ENCODE measurements at regions of chr15 and their contacts with region 1.

Region 1: DNA sequence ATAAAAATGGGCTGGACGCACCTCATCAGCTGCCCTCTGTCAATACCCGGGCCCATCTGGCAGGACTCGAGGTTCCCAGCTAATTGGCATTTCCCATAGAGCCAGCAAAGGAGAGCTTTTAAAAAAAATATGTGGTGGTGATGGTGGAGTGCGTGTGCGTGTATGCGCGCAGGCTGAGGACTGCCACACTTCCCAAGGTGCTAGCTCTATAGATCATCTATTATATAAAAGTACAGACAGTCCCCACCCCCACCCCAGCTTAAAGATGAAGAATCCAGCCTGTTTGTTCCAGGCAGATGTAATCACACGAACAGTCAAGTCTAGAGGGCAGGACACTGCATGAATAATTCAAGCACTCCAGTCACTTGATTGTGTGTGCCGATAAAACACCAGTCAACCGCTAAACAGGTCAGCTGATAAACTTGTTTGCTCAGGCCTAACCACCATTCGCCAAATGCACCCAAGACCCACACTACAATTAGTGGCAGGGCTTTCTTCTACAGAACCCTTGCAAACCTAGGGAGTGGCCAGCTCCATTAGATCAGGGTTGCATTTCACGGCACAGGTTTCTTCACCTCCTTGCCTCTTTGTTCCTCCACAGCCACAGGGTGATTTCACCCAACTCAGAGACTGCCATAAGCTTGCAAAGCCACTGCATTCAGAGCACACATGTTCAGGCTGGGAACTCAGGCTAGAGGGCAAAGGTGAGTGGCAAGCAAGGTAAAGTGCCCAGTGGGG is 5.8 kb downstream of the TLE3 start:
- H3K4me3 ChIP-seq: no peak overlapping the region
- H3K27ac ChIP-seq: peak overlapping the region; percentile 99
- H3K4me1 ChIP-seq: peaks cover 62% of the 10 kb centered on the region
- CTCF ChIP-seq: no peak

Region 2: GRCh38 chr15:70062321-70062956 is 29.5 kb before region 1 on chr15:
- CTCF ChIA-PET with region 1: interaction called, 7 read pairs
- POLR2A ChIA-PET with region 1: interaction called, 31 read pairs
- H3K4me3 ChIP-seq: no peak overlapping the region
- H3K27ac ChIP-seq: peak overlapping the region; percentile 85
- H3K4me1 ChIP-seq: peaks cover 34% of the 10 kb centered on the region
- CTCF ChIP-seq: no peak

Measured in HEK293 (cell line).